ENCODE measurements at regions of chr6 and their contacts with region 1.

Region 1: GRCh38 chr6:154156135-154156896 is 117.3 kb downstream of the OPRM1 start:
- DNase-seq: peak; percentile 72 to 79
- H3K4me3 ChIP-seq: no peak overlapping the region
- H3K4me1 ChIP-seq: peaks cover 5% of the 10 kb centered on the region
- H3K27me3 ChIP-seq: no peaks in the 10 kb centered on the region

Region 2: GRCh38 chr6:153941768-153942167 is 214.5 kb before region 1 on chr6:
- in situ Hi-C with region 1: no loop called
- DNase-seq: no peak
- H3K4me3 ChIP-seq: no peak overlapping the region
- H3K4me1 ChIP-seq: no peaks in the 10 kb centered on the region
- H3K27me3 ChIP-seq: no peaks in the 10 kb centered on the region

Region 3: DNA sequence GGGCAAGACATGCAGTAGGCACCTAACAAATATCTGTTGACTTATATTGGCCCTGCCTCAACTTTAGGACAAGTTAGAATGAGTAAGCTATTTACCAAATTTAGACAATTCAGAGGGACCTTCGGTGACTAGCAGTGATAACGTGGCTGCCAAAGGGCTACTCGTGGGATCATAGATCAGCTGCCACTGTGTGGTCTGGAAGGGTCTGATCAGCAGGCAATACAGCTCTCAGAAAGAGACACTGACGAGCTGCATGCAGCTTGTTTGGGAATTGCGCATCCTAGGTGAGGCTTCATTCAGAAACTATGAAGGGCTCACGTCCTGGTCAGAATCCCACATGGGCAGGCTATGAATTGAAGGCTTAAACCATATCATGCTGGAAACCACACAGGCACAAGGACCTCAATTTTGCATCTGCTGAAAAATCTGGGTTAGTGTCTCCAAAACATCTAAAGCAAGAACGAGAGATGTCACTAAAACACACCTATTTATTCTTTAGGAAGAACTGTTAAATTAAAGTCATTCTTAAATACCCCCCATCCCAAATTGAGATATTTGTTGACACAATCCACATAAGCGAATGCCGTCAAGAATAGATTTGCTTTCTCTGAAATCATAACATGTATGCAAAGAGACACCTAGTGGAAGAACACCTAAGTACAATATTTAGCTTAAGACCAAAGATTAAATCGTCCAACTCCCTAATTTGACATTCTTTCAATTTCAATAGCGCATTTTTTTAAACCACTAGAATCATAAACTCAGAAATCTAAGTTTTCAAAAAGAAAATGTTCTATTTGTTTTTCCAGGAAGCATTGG is 120.7 kb after region 1 on chr6:
- in situ Hi-C with region 1: loop called (anchors 5 kb)
- DNase-seq: peak in 1 of 2 experiments; percentile 70
- H3K4me3 ChIP-seq: no peak overlapping the region
- H3K4me1 ChIP-seq: peaks cover 6% of the 10 kb centered on the region; the same call in 1 of the 2 replicates
- H3K27me3 ChIP-seq: no peaks in the 10 kb centered on the region

Region 4: GRCh38 chr6:154367839-154368695 is 211.8 kb after region 1 on chr6:
- in situ Hi-C with region 1: loop called (anchors 10 kb)
- DNase-seq: no peak
- H3K4me3 ChIP-seq: no peak overlapping the region
- H3K4me1 ChIP-seq: peaks cover 16% of the 10 kb centered on the region
- H3K27me3 ChIP-seq: no peaks in the 10 kb centered on the region